ENCODE measurements at regions of chr6 and their contacts with region 1.

Region 1: DNA sequence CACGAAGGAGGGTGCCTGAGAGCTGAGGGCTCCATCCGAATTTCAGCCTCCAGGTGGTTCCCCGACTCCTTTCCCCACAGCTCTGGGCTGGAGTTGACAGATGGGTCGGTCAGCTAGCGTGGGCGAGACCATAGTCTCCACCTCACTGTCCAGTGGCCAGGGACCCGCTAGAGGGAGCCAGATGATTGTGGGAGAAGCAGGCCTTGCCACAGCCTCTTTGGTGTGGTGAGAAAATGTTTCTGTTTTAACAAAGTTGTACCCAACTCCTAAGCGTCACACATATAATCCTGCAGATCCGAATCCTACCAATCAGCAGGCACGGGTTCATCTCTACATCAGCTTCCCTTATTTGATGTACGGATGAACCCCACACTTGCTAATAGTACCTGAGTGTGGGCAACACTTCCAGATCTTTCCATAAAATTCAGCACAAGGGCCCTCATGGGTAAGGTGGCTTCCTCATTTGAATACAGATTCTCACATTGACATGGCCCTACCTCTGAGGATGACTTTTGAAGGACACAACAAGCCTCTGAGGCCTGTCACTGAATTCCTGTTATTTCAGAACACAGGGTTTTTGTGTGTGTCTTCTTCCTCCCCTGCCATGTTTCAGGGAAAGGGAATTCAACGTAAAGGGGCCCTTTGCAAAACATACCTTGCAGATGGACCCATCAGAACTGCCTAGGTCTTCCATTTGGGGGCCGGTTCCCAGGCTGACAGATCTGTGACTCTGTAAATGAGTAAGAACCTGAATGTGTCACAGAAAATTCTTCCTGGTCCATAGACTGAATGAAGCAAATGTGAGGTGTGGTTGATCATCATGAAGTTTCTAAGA is 103.2 kb upstream of the DUSP22 start:
- DNase-seq: peak; percentile 91
- H3K4me3 Mint-ChIP-seq: no peak overlapping the region
- H3K27ac Mint-ChIP-seq: peak overlapping the region; percentile 86
- H3K4me1 Mint-ChIP-seq: peaks cover 52% of the 10 kb centered on the region
- H3K27me3 Mint-ChIP-seq: no peaks in the 10 kb centered on the region

Region 2: DNA sequence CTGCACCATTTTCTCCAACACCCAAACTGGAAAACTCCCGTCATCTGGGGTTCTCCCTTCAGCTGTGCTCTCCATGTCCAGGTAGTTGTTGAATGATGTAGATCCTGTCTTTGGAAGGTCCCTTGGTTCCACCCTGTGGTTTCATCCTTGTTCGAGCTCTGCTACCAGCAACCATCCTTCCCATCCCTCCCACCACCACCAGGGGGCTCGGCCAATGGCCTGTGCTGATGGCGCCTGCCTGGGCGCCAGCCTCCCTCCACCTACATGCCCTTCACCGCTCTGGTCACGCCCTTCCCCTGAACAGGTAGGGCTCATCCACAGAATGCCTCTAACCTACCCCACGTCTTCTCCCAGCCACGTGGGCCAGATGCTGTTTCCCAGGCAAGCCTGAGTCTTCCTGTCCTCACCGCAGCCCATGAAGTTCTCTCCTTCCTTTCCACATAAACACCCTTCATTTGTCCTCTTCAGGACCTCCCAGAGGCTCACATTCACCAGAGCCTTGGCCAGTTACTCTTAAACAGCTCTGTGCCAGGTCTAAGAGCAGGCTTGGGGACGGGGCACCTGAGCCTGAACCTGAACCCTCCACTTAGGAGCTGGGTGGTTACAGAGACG is 28.1 kb after region 1 on chr6:
- CTCF ChIA-PET with region 1: interaction called, 10 read pairs
- POLR2A ChIA-PET with region 1: interaction called, 3 read pairs
- DNase-seq: no peak
- H3K4me3 Mint-ChIP-seq: no peak overlapping the region
- H3K27ac Mint-ChIP-seq: peak overlapping the region; percentile 11
- H3K4me1 Mint-ChIP-seq: peaks cover 56% of the 10 kb centered on the region
- H3K27me3 Mint-ChIP-seq: no peaks in the 10 kb centered on the region

Region 3: GRCh38 chr6:391559-392440 is 202.8 kb after region 1 on chr6 and contains the start of gene IRF4:
- CTCF ChIA-PET with region 1: interaction called, 34 read pairs
- POLR2A ChIA-PET with region 1: no interaction called
- DNase-seq: peak; percentile 70
- H3K4me3 Mint-ChIP-seq: peak within 1 kb of the TSS; percentile 91
- H3K27ac Mint-ChIP-seq: peak within 1 kb of the TSS; percentile 95
- H3K4me1 Mint-ChIP-seq: peaks cover 53% of the 10 kb centered on the region
- H3K27me3 Mint-ChIP-seq: no peaks in the 10 kb centered on the region
- total RNA-seq, gene IRF4: 111 to 126 TPM

Measured in activated CD4-positive, alpha-beta T cell treated with anti-CD3 and anti-CD28 coated beads, Interleukin-2, amount 10 ng/mL, durations not matched to agents 7 days and 5 days (primary cell).